Activated CD4-positive, alpha-beta memory T cell treated with anti-CD3 and anti-CD28 coated beads, Interleukin-2, amount 10 ng/mL, durations not matched to agents 7 days and 5 days (primary cell): ENCODE measurements at regions of chr3 and their contacts with region 1.

Region 1: GRCh38 chr3:18669374-18669773 is 244.2 kb upstream of the SATB1 start:
- DNase-seq: peak; percentile 57
- H3K4me3 Mint-ChIP-seq: no peak overlapping the region
- H3K27ac Mint-ChIP-seq: peak overlapping the region; percentile 69
- H3K4me1 Mint-ChIP-seq: peaks cover 55% of the 10 kb centered on the region
- H3K27me3 Mint-ChIP-seq: no peaks in the 10 kb centered on the region

Region 2: DNA sequence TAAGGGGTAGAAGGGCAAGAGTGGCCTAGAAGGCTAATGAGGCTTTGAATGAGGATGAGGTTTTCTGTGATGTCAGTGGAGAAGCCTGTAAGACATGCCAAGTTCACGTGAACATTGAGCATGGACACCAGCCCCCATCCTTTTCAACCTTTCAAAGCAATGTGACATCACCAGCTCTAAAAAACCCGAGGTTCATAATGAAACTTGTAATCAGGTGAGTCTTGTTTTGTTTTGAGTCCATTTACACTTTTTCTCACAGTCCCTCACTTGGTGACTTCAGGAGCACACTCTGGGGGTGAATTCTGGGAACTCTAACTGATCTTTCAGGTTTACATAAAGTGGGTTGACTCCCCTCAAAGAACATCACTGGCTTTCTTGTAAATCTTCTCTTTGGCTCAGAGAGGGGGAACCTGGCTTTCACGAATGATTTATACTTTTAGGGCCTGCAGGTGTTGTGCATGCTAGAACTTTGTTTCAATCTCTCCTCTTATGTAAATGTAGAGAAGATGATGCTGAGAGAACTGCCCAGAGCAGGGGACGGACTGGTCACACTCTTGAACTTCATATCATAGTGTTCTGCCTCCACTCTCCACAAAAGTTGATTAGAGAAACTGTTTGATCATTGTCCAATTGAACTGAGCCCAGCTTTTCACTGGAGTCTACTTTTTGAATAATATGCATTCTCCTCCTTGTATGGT is 19.6 kb before region 1 on chr3:
- CTCF ChIA-PET with region 1: interaction called, 4 read pairs
- POLR2A ChIA-PET with region 1: interaction called, 16 read pairs
- DNase-seq: peak; percentile 61
- H3K4me3 Mint-ChIP-seq: peak overlapping the region; percentile 25
- H3K27ac Mint-ChIP-seq: peak overlapping the region; percentile 90
- H3K4me1 Mint-ChIP-seq: peaks cover 86% of the 10 kb centered on the region
- H3K27me3 Mint-ChIP-seq: no peaks in the 10 kb centered on the region

Region 3: DNA sequence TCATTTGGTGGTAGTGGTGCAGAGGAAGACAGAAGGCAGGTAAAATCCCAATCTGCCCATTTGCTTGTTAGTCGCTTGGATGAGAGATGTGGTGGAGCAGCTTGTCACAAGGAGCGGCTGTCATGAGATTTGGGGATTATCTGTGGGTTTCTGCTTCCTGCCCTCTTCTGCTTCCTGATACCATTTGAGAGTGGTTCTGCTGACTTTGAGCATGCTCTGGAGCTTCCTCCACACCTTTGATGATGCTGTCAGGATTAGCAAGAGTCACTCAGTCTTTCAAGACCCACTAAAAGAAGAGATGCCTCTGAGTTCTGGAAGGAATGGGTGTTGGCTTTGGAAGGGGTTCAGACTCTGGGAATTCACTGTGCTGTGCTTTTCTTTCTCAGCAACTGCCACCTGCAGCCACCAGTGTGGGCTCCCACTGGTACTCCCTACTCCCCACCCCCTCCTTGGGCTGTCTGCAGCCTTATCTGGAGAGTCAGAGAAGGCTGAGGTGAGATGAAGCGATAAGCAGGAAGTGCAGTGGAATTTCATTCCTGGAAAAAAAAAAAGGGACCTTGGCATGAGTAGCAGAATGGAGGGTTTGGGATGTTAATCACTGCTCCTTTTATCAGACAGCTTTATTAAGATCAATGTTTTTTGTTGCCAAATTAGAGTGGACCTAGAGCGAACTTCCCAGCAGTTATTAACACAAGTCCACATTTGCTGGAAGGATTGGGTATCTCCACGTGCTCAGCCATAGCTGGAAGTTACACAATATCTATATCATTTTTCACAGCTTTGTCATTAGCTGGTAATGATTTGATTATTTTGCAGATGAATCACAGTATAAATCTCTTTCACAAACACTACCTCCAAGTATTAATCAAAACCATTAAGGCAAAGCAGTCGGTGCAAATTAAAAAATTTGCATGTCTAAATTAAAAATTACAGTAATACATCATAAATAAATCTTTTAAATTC is 11.2 kb before region 1 on chr3:
- CTCF ChIA-PET with region 1: interaction called, 14 read pairs
- POLR2A ChIA-PET with region 1: interaction called, 7 read pairs
- DNase-seq: peak; percentile 46
- H3K4me3 Mint-ChIP-seq: peak overlapping the region; percentile 8
- H3K27ac Mint-ChIP-seq: peak overlapping the region; percentile 67
- H3K4me1 Mint-ChIP-seq: peaks cover 64% of the 10 kb centered on the region
- H3K27me3 Mint-ChIP-seq: no peaks in the 10 kb centered on the region